Mammary epithelial cell (primary cell): ENCODE measurements at regions of chr9 and their contacts with region 1.

Region 1: DNA sequence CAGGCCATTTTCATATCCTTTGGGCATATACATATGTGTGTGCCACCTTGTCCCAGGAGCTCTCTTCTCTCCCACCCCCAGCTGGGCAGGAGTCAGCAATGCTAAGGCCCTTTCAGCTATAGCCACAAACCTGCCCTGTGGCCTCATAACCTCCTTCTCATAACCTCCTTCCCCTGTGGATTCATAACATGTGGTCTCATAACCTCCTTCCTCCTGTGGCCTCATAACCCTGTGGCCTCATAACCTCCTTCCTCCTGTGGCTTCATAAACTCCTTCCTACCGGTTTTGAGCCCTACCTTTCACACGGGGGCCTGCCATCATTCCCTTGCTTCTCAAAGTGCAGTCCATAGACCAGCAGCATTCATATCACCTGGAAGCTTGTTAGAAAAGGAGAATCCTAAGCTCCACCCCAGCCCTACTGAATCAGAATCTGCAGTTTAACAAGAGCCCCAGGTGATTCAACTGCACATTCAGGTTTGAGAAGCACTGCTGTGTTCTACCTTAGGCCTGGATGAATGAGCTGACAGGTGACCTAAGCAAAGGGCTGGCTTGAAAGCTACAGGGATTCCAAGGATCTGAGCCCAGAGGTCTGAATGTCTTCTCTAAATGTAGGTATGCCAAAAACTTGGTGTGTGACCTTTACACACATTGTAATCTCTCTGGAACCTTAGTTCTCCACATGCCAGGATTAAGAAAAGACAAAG is 41.9 kb upstream of the PLPP6 start:
- DNase-seq: peak; percentile 16
- H3K4me3 ChIP-seq: no peak overlapping the region
- H3K27ac ChIP-seq: no peak overlapping the region
- H3K4me1 ChIP-seq: no peaks in the 10 kb centered on the region
- H3K27me3 ChIP-seq: no peaks in the 10 kb centered on the region
- CTCF ChIP-seq: no peak

Region 2: GRCh38 chr9:4548811-4549725 is 71.1 kb before region 1 on chr9:
- CTCF ChIA-PET with region 1: no interaction called
- dilution Hi-C with region 1: loop called (anchors 5 kb)
- in situ Hi-C with region 1: no loop called
- intact Hi-C with region 1: no loop called
- DNase-seq: no peak
- H3K4me3 ChIP-seq: no peak overlapping the region
- H3K27ac ChIP-seq: no peak overlapping the region
- H3K4me1 ChIP-seq: no peaks in the 10 kb centered on the region
- H3K27me3 ChIP-seq: no peaks in the 10 kb centered on the region
- CTCF ChIP-seq: peak in 1 of 2 donors; percentile 40

Region 3: GRCh38 chr9:4583001-4583400 is 37.2 kb before region 1 on chr9:
- CTCF ChIA-PET with region 1: no interaction called
- dilution Hi-C with region 1: loop called (anchors 5 kb)
- in situ Hi-C with region 1: no loop called
- intact Hi-C with region 1: no loop called
- DNase-seq: no peak
- H3K4me3 ChIP-seq: no peak overlapping the region
- H3K27ac ChIP-seq: no peak overlapping the region
- H3K4me1 ChIP-seq: no peaks in the 10 kb centered on the region
- H3K27me3 ChIP-seq: no peaks in the 10 kb centered on the region
- CTCF ChIP-seq: no peak

Region 4: DNA sequence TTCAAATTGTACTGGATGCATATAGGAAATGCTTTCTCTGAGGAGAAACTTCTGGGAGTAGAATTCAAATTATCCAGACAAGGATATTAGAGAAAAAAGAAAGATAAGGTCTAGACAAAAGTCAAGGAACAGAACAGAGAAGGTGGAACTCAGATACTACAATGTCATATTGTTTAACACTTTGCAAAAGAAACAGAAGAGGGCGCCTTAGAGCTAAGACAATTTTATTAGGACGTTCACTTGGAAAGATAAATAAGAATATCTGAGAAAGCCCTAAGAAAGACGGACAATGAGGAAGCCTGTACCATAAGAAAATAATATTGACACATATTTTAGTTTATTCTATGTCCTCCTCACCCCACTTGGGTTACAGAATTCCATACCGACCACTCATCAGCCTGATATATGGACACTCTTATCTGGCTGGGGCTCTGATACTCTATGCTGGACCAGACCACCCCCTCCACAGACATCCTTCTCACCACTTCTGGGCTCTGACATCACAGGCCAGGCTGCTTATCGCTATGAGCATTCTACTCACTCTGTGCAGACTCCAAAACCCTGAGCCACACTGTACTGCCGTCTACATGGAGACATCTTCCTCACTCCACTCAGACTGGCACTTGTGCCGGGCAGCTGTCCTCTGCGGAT is 129.9 kb after region 1 on chr9:
- CTCF ChIA-PET with region 1: no interaction called
- dilution Hi-C with region 1: no loop called
- in situ Hi-C with region 1: no loop called
- intact Hi-C with region 1: no loop called
- DNase-seq: peak; percentile 29
- H3K4me3 ChIP-seq: no peak overlapping the region
- H3K27ac ChIP-seq: no peak overlapping the region
- H3K4me1 ChIP-seq: no peaks in the 10 kb centered on the region
- H3K27me3 ChIP-seq: no peaks in the 10 kb centered on the region
- CTCF ChIP-seq: peak; percentile 61 to 65

Region 5: DNA sequence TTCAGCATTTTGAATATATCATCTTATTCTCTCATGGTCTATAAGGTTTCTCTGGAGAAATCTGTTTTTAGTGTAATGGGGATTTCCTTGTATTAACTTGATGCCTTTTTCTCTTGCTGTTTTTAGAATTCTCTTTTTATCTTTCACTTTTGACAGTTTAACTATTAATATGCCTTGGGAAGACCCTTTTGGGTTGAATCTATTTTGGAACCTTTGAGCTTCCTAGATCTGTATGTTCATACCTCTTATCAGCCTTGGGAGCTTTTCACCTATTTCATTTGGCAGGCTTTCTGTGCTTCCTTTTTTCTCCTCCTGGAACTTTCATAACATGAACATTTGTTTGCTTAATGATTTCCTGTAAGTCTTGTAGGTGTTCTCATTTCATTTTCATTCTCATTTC is 194.7 kb after region 1 on chr9:
- CTCF ChIA-PET with region 1: no interaction called
- dilution Hi-C with region 1: no loop called
- in situ Hi-C with region 1: no loop called
- intact Hi-C with region 1: no loop called
- DNase-seq: no peak
- H3K4me3 ChIP-seq: no peak overlapping the region
- H3K27ac ChIP-seq: no peak overlapping the region
- H3K4me1 ChIP-seq: no peaks in the 10 kb centered on the region
- H3K27me3 ChIP-seq: no peaks in the 10 kb centered on the region
- CTCF ChIP-seq: no peak